Right ventricle myocardium inferior (tissue), 1 donor: ENCODE measurements at regions of chr19 and their contacts with region 1.

Region 1: GRCh38 chr19:55632463-55632834 is 8.1 kb upstream of the ZNF784 start:
- DNase-seq: no peak
- ATAC-seq: peak; percentile 60

Region 2: GRCh38 chr19:55461259-55461973 is 171.0 kb before region 1 on chr19 and contains the start of gene ISOC2:
- intact Hi-C with region 1: loop called (anchors 5 kb)
- DNase-seq: peak; percentile 100
- ATAC-seq: peak; percentile 94
- total RNA-seq, gene ISOC2: 55.2 TPM

Region 3: DNA sequence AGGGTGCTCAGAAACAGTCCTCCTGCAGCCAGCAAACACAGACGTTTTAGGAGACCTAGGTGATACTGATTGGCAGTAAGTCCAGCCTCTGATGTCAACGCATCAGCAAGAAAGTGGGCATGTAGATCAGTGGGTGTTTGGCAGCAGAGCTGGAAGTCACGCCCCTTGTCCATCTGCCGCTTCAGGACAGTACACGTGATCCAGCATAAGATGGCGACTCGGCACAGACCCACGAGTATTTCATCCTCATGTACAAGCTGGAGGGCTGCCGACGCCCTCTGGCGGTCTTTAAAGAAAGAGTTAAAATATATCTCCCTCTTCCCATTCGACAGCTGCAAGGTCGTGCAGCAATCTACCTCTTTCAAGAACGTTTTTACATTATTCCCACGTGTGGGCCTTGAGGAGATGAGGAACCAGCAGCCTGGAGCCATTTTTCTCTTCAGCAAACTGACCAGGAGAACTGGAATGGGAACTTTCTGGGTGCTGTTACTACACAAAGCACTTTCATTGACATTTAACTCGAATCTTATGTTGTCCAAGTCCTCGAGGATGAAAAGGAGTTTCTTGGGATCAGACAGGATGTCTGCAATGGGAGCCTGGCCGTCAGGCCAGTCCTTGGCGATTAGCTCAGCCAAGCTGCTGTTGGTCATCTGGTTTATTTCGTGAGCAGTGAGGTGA is 177.1 kb after region 1 on chr19:
- intact Hi-C with region 1: loop called (anchors 5 kb)
- DNase-seq: no peak
- ATAC-seq: no peak